CD14-positive monocyte (primary cell): ENCODE measurements at regions of chr4 and their contacts with region 1.

Region 1: GRCh38 chr4:152735396-152735859 is 44.1 kb downstream of the TIGD4 start:
- DNase-seq: peak in 2 of 3 donors; percentile 21 to 42
- H3K4me3 ChIP-seq: no peak overlapping the region
- H3K4me3 Mint-ChIP-seq: no peak overlapping the region
- H3K27ac ChIP-seq: no peak overlapping the region
- H3K27ac Mint-ChIP-seq: no peak overlapping the region
- H3K4me1 ChIP-seq: peaks cover 19 to 23% of the 10 kb centered on the region in 2 donors
- H3K4me1 Mint-ChIP-seq: peaks cover 25% of the 10 kb centered on the region
- H3K27me3 ChIP-seq: no peaks in the 10 kb centered on the region
- H3K27me3 Mint-ChIP-seq: peaks cover 0 to 2% (median 0%) of the 10 kb centered on the region in 3 donors
- CTCF ChIP-seq: peak; percentile 79

Region 2: GRCh38 chr4:152454398-152455011 is 280.9 kb before region 1 on chr4:
- intact Hi-C with region 1: loop called in 1 of 2 experiments (anchors 10 kb)
- DNase-seq: peak in 1 of 3 donors; percentile 23
- H3K4me3 ChIP-seq: no peak overlapping the region
- H3K4me3 Mint-ChIP-seq: no peak overlapping the region
- H3K27ac ChIP-seq: no peak overlapping the region
- H3K27ac Mint-ChIP-seq: peak overlapping the region in 1 of 7 donors; percentile 20
- H3K4me1 ChIP-seq: peaks cover 16 to 19% of the 10 kb centered on the region in 2 donors
- H3K4me1 Mint-ChIP-seq: peaks cover 26% of the 10 kb centered on the region
- H3K27me3 ChIP-seq: no peaks in the 10 kb centered on the region
- H3K27me3 Mint-ChIP-seq: no peaks in the 10 kb centered on the region
- CTCF ChIP-seq: peak; percentile 75

Region 3: DNA sequence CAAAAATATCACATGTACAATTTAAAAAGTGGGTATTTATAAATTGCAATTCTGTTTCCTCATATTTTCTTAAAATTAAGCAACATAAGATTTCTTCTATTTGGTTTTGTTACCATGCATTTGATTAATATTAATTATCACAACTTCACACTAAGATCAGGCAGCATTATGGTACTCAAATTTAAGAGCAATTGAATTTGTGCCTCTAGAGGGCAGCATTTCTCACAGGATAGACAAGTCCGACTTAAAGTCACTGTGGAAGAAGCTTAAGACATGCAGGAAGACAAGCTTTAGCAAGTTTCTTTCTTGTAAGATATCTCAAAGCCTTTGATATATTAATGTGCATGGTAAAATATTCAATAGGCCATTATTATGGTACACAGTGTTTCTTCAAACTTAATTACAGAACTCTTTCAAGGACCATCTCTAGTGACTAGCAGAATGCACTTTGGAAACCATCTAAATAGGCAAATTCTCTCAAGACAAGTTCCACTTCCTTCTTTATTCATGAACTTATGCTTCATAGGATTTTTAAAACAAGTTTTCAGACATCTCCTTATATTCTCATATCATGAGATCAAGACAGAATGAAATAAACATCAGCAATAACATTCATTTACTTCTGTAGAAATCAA is 234.5 kb before region 1 on chr4:
- intact Hi-C with region 1: loop called in 1 of 2 experiments (anchors 5 kb)
- DNase-seq: peak; percentile 72 to 79 (median 76)
- H3K4me3 ChIP-seq: peak overlapping the region in 1 of 3 experiments; percentile 37
- H3K4me3 Mint-ChIP-seq: peak overlapping the region in 1 of 2 donors; percentile 21
- H3K27ac ChIP-seq: peak overlapping the region in 1 of 2 donors; percentile 45
- H3K27ac Mint-ChIP-seq: peak overlapping the region in 4 of 7 donors; percentile 29 to 81 (median 68)
- H3K4me1 ChIP-seq: peaks cover 5 to 13% of the 10 kb centered on the region in 2 donors
- H3K4me1 Mint-ChIP-seq: peaks cover 27% of the 10 kb centered on the region
- H3K27me3 ChIP-seq: no peaks in the 10 kb centered on the region
- H3K27me3 Mint-ChIP-seq: no peaks in the 10 kb centered on the region
- CTCF ChIP-seq: peak; percentile 87